Heart right ventricle (tissue), 16 donors: ENCODE measurements at regions of chr15 and their contacts with region 1.

Region 1: GRCh38 chr15:59221511-59222505 is 15.2 kb downstream of the LDHAL6B start:
- DNase-seq: no peak
- ATAC-seq: peak in 2 of 8 donors; percentile 42
- H3K4me3 ChIP-seq: no peak overlapping the region
- H3K27ac ChIP-seq: peak overlapping the region in 2 of 10 donors; percentile 8 to 10
- H3K4me1 ChIP-seq: peaks cover 3 to 48% (median 31%) of the 10 kb centered on the region in 9 donors
- H3K27me3 ChIP-seq: no peaks in the 10 kb centered on the region
- CTCF ChIP-seq: no peak

Region 2: GRCh38 chr15:59174835-59175831 is 46.7 kb before region 1 on chr15:
- intact Hi-C with region 1: loop called in 1 of 10 experiments (anchors 5 kb)
- DNase-seq: peak; percentile 32 to 44
- ATAC-seq: peak; percentile 64 to 84 (median 81)
- H3K4me3 ChIP-seq: no peak overlapping the region
- H3K27ac ChIP-seq: peak overlapping the region in 2 of 10 donors; percentile 58 to 69
- H3K4me1 ChIP-seq: peaks cover 0 to 49% (median 11%) of the 10 kb centered on the region in 9 donors
- H3K27me3 ChIP-seq: no peaks in the 10 kb centered on the region
- CTCF ChIP-seq: peak; percentile 17 to 73 (median 55)

Region 3: GRCh38 chr15:59420986-59421618 is 199.3 kb after region 1 on chr15:
- intact Hi-C with region 1: no loop called
- DNase-seq: no peak
- ATAC-seq: no peak
- H3K4me3 ChIP-seq: no peak overlapping the region
- H3K27ac ChIP-seq: no peak overlapping the region
- H3K4me1 ChIP-seq: no peaks in the 10 kb centered on the region
- H3K27me3 ChIP-seq: peaks cover 0 to 16% (median 5%) of the 10 kb centered on the region in 7 donors
- CTCF ChIP-seq: no peak